HEK293 (cell line): ENCODE measurements at regions of chr10 and their contacts with region 1.

Region 1: GRCh38 chr10:42782446-42783180 is at the start of gene BMS1:
- H3K4me3 ChIP-seq: peak within 1 kb of the TSS; percentile 74
- H3K27ac ChIP-seq: peak within 1 kb of the TSS; percentile 68
- H3K4me1 ChIP-seq: no peaks in the 10 kb centered on the region
- CTCF ChIP-seq: peak; percentile 41

Region 2: DNA sequence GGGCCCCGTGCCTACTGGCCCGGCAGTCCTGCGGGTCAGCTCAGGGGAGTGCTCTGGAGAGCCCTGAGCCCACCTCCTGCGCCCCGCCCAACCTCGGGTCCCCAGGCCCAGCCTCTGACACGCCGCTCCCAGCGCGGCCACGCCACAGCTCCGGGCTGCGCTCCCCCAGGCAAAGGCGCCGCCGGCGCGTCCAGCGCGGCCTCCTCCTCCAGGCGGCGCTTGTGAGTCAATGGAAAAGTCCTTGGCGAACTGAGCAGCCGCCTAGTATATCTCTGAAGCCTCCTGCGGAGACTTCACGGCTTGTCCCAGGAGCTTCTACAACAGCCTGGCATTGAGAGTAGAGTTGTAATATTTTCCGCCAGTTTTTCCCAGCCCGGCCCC is 29.5 kb before region 1 on chr10:
- CTCF ChIA-PET with region 1: interaction called, 10 read pairs
- POLR2A ChIA-PET with region 1: interaction called, 13 read pairs
- H3K4me3 ChIP-seq: peak overlapping the region; percentile 29
- H3K27ac ChIP-seq: no peak overlapping the region
- H3K4me1 ChIP-seq: peaks cover 4% of the 10 kb centered on the region
- CTCF ChIP-seq: peak; percentile 56; the same call in 1 of the 2 replicates